ENCODE measurements at regions of chr9 and their contacts with region 1.

Region 1: GRCh38 chr9:114291064-114291474 is 31.8 kb upstream of the ORM1 start:
- DNase-seq: peak; percentile 83
- H3K4me3 Mint-ChIP-seq: no peak overlapping the region
- H3K27ac Mint-ChIP-seq: no peak overlapping the region
- H3K4me1 Mint-ChIP-seq: peaks cover 2% of the 10 kb centered on the region
- H3K27me3 Mint-ChIP-seq: peaks cover 2% of the 10 kb centered on the region

Region 2: DNA sequence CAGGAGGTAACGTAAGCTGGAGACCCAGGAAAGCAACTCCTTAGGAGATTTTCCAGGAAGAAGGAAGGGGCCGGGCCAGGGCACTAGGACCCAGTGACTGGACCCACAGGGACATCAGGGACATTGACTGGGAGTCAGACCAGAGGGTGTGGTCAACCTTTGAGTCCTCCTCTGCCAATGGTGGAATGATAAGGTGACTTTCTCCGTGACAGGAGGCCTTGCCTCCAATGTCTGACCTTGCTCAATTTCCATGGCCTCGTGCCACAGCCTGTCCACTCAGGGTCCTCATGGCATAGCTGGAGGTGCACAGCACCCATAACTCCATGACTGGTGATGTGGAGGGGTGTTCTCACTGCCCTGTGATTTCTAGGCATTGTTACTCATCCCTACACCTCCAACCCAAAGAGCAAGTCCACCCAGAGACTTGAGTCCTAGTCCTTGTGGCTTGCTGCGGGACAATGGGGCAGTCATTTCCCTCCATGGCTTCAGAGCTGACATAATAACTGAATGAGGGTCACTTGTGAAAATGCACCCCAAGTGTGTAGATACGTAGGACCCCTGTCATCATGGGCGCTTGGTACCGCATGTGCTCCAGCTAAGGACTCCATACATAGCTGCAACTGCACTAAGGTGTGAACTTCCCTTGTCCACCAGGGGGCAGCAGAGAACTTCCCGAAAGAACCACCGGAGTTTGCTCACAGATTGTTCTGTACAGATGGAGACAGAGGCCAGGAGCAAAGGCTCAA is 208.9 kb before region 1 on chr9:
- CTCF ChIA-PET with region 1: interaction called, 75 read pairs
- intact Hi-C with region 1: loop called (anchors 1 kb)
- DNase-seq: peak; percentile 94
- H3K4me3 Mint-ChIP-seq: no peak overlapping the region
- H3K27ac Mint-ChIP-seq: no peak overlapping the region
- H3K4me1 Mint-ChIP-seq: no peaks in the 10 kb centered on the region
- H3K27me3 Mint-ChIP-seq: no peaks in the 10 kb centered on the region

Region 3: GRCh38 chr9:114108016-114108833 is 182.8 kb before region 1 on chr9:
- CTCF ChIA-PET with region 1: interaction called, 33 read pairs
- intact Hi-C with region 1: loop called (anchors 1 kb)
- DNase-seq: peak; percentile 78
- H3K4me3 Mint-ChIP-seq: no peak overlapping the region
- H3K27ac Mint-ChIP-seq: no peak overlapping the region
- H3K4me1 Mint-ChIP-seq: no peaks in the 10 kb centered on the region
- H3K27me3 Mint-ChIP-seq: peaks cover 6% of the 10 kb centered on the region

Region 4: GRCh38 chr9:114143234-114143633 is 147.8 kb before region 1 on chr9:
- CTCF ChIA-PET with region 1: interaction called, 10 read pairs
- intact Hi-C with region 1: no loop called
- DNase-seq: no peak
- H3K4me3 Mint-ChIP-seq: no peak overlapping the region
- H3K27ac Mint-ChIP-seq: no peak overlapping the region
- H3K4me1 Mint-ChIP-seq: no peaks in the 10 kb centered on the region
- H3K27me3 Mint-ChIP-seq: peaks cover 9% of the 10 kb centered on the region

Region 5: GRCh38 chr9:114155263-114155972 is 135.7 kb before region 1 on chr9 and contains the start of gene COL27A1:
- CTCF ChIA-PET with region 1: interaction called, 38 read pairs
- intact Hi-C with region 1: loop called (anchors 1 kb)
- DNase-seq: peak; percentile 87
- H3K4me3 Mint-ChIP-seq: peak within 1 kb of the TSS; percentile 81
- H3K27ac Mint-ChIP-seq: peak within 1 kb of the TSS; percentile 62
- H3K4me1 Mint-ChIP-seq: peaks cover 16% of the 10 kb centered on the region
- H3K27me3 Mint-ChIP-seq: peaks cover 27% of the 10 kb centered on the region
- total RNA-seq, gene COL27A1: 7.0 to 10.6 TPM

Region 6: GRCh38 chr9:114278881-114279570 is 12.0 kb before region 1 on chr9:
- CTCF ChIA-PET with region 1: interaction called, 12 read pairs
- intact Hi-C with region 1: no loop called
- DNase-seq: no peak
- H3K4me3 Mint-ChIP-seq: no peak overlapping the region
- H3K27ac Mint-ChIP-seq: no peak overlapping the region
- H3K4me1 Mint-ChIP-seq: no peaks in the 10 kb centered on the region
- H3K27me3 Mint-ChIP-seq: no peaks in the 10 kb centered on the region

Measured in activated naive CD4-positive, alpha-beta T cell treated with anti-CD3 and anti-CD28 coated beads for 36 hours (primary cell).